Activated B cell treated with CpG ODN at 0.5 μM for 24 hours (primary cell): ENCODE measurements at regions of chr2 and their contacts with region 1.

Region 1: DNA sequence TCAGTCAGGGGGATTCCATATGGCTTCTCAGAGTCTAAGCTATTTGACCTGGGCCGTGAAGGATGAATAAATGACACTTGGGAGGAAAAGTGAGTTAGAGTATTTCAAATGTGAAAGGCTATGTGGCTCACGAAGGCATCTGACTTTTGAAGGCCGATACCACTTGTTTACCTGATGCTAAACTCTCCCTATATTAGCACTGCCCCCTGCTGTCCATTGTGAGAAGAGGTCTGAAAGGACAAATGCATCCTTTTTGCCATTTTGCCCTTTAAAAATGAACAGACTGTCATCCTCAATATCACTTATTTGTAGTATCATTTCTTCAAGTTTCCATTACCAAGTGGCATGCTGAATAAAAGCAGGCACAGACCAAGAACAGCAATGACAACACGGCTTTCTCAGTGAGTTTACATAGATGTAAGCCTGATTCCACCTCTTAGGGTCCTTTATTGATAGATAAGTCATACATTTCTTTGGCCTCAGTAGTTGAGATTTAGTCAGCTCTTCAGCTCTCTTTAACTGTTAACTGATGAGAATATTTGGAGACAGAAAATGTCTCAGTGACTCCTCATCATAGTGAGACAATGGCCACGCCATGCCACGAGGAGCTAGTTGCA is 40.1 kb downstream of the DOCK10 start:
- DNase-seq: no peak
- ATAC-seq: peak; percentile 68
- H3K4me3 Mint-ChIP-seq: peak overlapping the region; percentile 53
- H3K27ac Mint-ChIP-seq: peak overlapping the region; percentile 79
- H3K4me1 Mint-ChIP-seq: peaks cover 34% of the 10 kb centered on the region
- H3K27me3 Mint-ChIP-seq: no peaks in the 10 kb centered on the region
- CTCF ChIP-seq: no peak

Region 2: GRCh38 chr2:224691563-224691962 is 310.6 kb before region 1 on chr2:
- CTCF ChIA-PET with region 1: no interaction called
- POLR2A ChIA-PET with region 1: no interaction called
- intact Hi-C with region 1: no loop called
- DNase-seq: no peak
- ATAC-seq: no peak
- H3K4me3 Mint-ChIP-seq: no peak overlapping the region
- H3K27ac Mint-ChIP-seq: no peak overlapping the region
- H3K4me1 Mint-ChIP-seq: no peaks in the 10 kb centered on the region
- H3K27me3 Mint-ChIP-seq: no peaks in the 10 kb centered on the region
- CTCF ChIP-seq: no peak

Region 3: DNA sequence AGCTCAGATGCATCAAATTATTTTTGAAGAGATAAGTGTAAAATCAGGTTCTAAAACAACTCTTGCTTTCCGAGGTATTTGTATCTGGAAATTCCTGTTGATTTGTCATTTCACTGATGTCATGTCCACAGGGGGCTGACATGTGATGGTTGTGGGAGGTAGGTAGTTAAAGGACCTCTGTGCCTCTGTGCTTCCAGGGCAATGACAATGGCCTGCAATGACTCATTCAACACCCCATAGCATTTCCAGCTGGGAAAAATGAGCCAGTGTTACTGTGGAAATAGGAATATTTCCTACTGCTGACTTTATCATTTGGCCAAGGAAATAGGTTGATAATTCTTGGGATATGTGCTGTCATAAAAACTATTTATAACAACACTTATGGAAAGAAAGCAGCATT is 199.7 kb before region 1 on chr2:
- CTCF ChIA-PET with region 1: interaction called, 3 read pairs
- POLR2A ChIA-PET with region 1: no interaction called
- intact Hi-C with region 1: loop called (anchors 1 kb)
- DNase-seq: no peak
- ATAC-seq: no peak
- H3K4me3 Mint-ChIP-seq: no peak overlapping the region
- H3K27ac Mint-ChIP-seq: no peak overlapping the region
- H3K4me1 Mint-ChIP-seq: no peaks in the 10 kb centered on the region
- H3K27me3 Mint-ChIP-seq: no peaks in the 10 kb centered on the region
- CTCF ChIP-seq: no peak

Region 4: GRCh38 chr2:224894356-224894755 is 107.8 kb before region 1 on chr2:
- CTCF ChIA-PET with region 1: interaction called, 3 read pairs
- POLR2A ChIA-PET with region 1: no interaction called
- intact Hi-C with region 1: loop called (anchors 1 kb)
- DNase-seq: no peak
- ATAC-seq: peak; percentile 70
- H3K4me3 Mint-ChIP-seq: peak overlapping the region; percentile 74
- H3K27ac Mint-ChIP-seq: peak overlapping the region; percentile 95
- H3K4me1 Mint-ChIP-seq: peaks cover 62% of the 10 kb centered on the region
- H3K27me3 Mint-ChIP-seq: no peaks in the 10 kb centered on the region
- CTCF ChIP-seq: no peak

Region 5: GRCh38 chr2:224983712-224984554 is 18.2 kb before region 1 on chr2:
- CTCF ChIA-PET with region 1: interaction called, 8 read pairs
- POLR2A ChIA-PET with region 1: no interaction called
- intact Hi-C with region 1: loop called (anchors 2 kb)
- DNase-seq: no peak
- ATAC-seq: no peak
- H3K4me3 Mint-ChIP-seq: peak overlapping the region; percentile 75
- H3K27ac Mint-ChIP-seq: peak overlapping the region; percentile 76
- H3K4me1 Mint-ChIP-seq: peaks cover 50% of the 10 kb centered on the region
- H3K27me3 Mint-ChIP-seq: no peaks in the 10 kb centered on the region
- CTCF ChIP-seq: no peak

Region 6: DNA sequence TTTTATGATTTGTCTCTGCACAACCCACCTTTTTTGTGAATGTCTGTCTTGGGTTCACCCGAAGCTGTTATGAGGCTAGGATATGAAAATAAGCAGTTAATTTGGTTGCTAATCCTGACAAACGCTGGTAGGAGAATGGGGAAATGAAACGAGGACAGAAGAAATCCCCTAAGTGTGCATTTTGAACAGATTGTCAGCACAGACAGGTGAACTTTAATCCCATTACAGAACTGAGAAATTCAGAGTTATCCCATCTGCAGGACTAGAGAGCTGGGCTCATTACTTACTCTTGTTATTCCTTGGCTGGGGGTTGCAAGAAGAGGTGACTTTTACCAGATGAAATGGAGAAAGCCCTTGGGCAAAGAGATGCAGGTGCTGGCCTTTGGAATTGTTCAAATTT is 274.1 kb after region 1 on chr2:
- CTCF ChIA-PET with region 1: no interaction called
- POLR2A ChIA-PET with region 1: no interaction called
- intact Hi-C with region 1: loop called (anchors 2 kb)
- DNase-seq: no peak
- ATAC-seq: peak; percentile 70
- H3K4me3 Mint-ChIP-seq: peak overlapping the region; percentile 3
- H3K27ac Mint-ChIP-seq: peak overlapping the region; percentile 27
- H3K4me1 Mint-ChIP-seq: peaks cover 29% of the 10 kb centered on the region
- H3K27me3 Mint-ChIP-seq: no peaks in the 10 kb centered on the region
- CTCF ChIP-seq: no peak